ENCODE measurements at regions of chr7 and their contacts with region 1.

Region 1: DNA sequence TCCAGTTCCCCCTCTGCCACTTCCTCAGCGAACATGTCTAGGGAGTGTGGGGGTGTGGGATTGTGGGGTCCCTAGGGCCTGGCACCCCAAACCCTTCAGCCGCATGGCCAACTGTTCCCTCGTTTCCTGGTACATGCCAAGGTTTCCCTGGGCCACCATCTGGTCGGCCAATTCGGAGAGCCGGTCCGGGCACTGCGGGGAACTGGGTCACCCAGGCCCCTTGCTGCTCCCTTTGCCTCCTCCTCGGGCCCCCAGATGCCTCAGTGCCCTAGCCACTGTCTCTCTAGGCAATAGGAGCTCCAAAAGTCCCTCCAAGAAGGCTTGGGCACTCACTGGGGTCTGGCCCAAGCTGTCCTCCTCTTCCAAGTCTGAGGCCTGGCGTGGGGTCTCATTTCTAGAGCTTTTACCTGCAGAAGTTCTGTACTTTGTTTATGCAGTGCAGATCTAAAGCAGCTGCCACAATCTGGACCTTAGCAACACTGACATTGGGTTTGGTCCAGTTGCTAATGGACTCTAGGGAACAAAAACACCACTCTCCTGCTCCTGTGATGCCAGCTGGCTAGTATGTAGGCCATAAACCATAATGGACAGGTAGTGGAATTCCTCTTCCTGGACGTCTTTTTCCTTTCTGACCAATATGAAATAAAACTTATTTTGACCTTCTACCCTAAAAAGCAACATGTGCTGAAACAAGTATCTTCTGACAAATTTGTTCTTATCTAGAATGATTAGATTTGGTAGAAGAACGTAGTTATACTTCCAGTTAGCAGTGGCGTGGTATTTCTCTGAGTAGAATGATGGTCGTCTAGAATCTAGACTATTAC is 172.9 kb downstream of the LRRC4 start:
- DNase-seq: peak; percentile 58
- H3K4me3 Mint-ChIP-seq: no peak overlapping the region
- H3K27ac Mint-ChIP-seq: peak overlapping the region; percentile 68
- H3K4me1 Mint-ChIP-seq: peaks cover 50% of the 10 kb centered on the region
- H3K27me3 Mint-ChIP-seq: peaks cover 2% of the 10 kb centered on the region

Region 2: DNA sequence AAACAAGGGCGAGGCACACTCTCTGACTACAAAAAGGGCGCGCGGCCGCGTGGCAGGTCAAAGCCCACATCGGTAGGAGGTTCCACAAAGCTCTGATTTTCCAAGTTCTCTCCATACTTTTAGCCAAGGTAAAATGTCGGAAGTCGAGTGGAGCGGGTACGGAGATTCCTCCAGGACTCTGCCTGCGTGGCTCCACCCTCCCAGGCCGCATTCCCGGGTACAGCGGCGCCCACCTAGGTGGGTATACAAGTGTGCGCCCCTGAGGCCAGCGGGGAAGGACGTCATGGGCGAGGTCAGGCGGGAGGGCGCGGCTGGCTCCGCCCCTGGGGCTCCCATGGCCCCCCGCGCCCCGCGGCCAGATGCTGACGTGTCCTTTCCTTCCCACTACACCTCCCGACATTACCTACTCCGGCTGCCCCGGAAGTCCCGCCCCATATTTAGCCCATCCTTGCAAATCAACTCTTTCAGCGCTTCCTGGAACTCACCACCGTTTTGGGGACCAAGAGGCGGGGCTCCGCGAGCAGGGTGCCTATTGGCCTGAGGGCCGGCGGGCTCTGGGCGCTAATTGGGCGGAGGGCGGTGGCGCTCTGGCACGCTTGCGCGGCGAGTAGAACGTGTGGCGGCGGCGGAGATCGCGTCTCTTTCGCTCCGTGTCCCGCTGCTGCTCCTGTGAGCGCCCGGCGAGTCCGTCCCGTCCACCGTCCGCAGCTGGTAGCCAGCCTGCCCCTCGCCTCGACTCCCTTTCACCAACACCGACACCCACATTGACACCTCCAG is 206.6 kb before region 1 on chr7 and contains the start of gene SND1:
- intact Hi-C with region 1: loop called (anchors 2 kb)
- DNase-seq: peak; percentile 100
- H3K4me3 Mint-ChIP-seq: peak within 1 kb of the TSS; percentile 99
- H3K27ac Mint-ChIP-seq: peak within 1 kb of the TSS; percentile 97
- H3K4me1 Mint-ChIP-seq: peaks cover 31% of the 10 kb centered on the region
- H3K27me3 Mint-ChIP-seq: peaks cover 6% of the 10 kb centered on the region
- total RNA-seq, gene SND1: 275 and 295 TPM in 2 replicates

Region 3: GRCh38 chr7:127717502-127718339 is 140.6 kb before region 1 on chr7:
- intact Hi-C with region 1: loop called (anchors 5 kb)
- DNase-seq: no peak
- H3K4me3 Mint-ChIP-seq: no peak overlapping the region
- H3K27ac Mint-ChIP-seq: peak overlapping the region; percentile 55
- H3K4me1 Mint-ChIP-seq: peaks cover 28% of the 10 kb centered on the region
- H3K27me3 Mint-ChIP-seq: no peaks in the 10 kb centered on the region

Region 4: DNA sequence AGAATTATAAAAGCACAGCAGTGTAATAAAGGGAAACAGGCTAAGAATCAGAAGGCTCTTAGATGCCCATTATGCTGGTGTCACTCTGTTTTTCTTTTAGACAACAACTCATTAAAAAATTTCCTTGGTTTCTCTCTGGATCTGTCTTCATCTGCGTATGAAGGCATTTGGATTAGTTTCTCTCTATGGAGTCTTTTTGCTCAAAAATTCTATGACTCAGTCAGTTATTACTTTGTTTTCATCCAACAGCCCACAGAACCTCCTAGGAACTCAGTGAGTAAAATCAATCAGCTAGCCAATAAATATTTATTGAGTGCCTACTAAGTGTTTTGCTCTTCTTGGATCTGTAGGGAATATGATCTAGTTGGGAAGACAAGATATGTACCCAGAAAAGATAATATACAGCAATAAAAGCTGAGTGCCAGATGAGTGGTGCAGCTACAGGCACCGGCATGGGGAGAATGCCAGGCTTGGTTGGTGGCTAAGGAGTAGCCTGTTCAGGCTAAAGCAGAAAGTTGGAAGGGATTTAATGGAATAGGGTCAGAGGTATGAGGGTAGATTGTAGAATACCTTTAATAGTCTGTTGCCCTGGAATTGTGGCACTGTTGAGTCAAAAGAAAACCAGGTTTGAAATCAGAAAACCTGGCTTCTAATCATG is 16.8 kb after region 1 on chr7:
- intact Hi-C with region 1: loop called (anchors 1 kb)
- DNase-seq: no peak
- H3K4me3 Mint-ChIP-seq: no peak overlapping the region
- H3K27ac Mint-ChIP-seq: peak overlapping the region; percentile 50
- H3K4me1 Mint-ChIP-seq: peaks cover 25% of the 10 kb centered on the region
- H3K27me3 Mint-ChIP-seq: no peaks in the 10 kb centered on the region

Region 5: GRCh38 chr7:127905491-127906330 is 47.4 kb after region 1 on chr7:
- intact Hi-C with region 1: no loop called
- DNase-seq: peak; percentile 75
- H3K4me3 Mint-ChIP-seq: no peak overlapping the region
- H3K27ac Mint-ChIP-seq: peak overlapping the region; percentile 74
- H3K4me1 Mint-ChIP-seq: peaks cover 61% of the 10 kb centered on the region
- H3K27me3 Mint-ChIP-seq: no peaks in the 10 kb centered on the region